KBM-7 (cell line): ENCODE measurements at regions of chr2 and their contacts with region 1.

Region 1: DNA sequence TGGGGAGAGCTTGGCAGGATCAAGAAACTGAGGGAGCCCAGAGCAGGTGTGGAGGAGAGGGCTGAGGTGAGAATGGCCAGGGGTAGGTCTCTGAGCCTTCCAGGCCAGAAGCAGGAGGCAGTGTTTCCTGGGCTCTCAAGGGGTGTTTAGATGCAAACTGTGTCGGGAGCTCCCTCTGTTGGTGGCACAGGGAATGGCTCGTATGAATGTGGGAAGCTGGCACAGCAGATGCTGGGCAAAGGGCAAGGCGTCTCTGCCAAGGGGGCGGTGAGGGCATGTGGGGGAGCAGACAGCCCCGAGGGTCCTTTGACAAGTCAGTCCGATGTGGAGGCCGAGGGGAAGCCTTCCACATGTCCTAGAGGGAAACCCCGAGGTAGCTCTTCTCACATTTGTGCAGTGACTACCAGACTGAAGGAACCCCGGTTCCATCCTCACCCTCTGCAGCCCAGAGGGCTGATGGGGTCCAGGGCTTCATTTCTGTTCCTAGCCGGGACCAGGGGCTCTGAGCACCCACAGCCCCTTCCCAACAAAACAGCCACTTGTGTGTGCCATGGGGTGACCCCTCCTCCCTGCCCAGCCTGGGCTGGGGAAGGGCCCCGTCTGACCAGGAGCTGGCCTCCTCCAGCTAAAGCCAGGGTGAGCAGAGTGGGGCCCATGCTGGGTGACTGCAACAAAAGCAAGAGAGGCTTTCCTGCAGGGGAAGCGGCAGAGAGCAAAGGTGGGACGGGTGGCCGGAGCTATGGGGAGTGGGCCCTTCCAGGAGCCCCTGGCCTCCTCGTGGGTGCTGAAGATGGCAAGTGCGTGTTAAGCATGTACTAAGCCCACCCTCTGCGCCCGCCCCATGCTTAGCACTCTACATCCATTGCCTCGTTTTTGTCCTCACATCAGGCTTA is 103.4 kb downstream of the SEPTIN10 start:
- DNase-seq: peak; percentile 68

Region 2: GRCh38 chr2:109128048-109128465 is 382.3 kb before region 1 on chr2:
- in situ Hi-C with region 1: loop called (anchors 25 kb)
- DNase-seq: peak; percentile 84

Region 3: DNA sequence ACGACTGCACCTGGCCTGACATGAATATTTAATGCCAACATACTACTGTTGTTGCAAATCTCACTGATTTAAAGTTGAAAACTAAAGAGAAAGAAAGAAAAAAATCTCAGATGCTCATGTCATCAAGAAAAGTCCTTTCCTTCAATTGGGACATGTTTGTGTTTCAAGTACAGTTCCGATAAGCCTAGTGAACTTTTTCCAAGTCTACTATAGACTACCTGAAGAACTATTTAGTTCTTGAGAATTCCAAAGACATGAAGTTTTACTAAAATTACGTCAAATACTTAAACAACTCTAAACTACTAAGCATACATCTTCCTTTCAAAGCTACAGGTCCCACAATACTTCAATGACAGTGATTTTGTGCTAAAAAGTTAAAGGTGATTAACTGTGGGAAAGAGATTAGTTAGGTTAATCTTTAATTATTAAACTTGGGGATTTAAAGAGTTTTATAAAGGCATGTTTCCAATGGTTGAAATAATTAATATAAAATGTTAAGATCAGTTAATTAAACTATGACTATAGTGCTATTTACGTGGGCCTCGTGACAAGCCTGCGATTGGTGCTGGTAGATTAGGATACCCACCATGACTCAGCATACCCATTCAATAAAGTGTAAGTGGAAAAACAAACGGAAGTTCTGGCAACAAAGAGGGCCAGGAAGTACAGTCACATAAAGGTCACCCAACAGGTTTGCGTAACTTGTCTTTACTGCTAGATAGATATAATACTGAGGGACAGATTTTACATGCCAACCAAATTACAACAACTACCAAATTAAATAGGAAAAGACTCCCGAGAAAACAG is 47.9 kb after region 1 on chr2:
- in situ Hi-C with region 1: no loop called
- DNase-seq: peak; percentile 50

Region 4: DNA sequence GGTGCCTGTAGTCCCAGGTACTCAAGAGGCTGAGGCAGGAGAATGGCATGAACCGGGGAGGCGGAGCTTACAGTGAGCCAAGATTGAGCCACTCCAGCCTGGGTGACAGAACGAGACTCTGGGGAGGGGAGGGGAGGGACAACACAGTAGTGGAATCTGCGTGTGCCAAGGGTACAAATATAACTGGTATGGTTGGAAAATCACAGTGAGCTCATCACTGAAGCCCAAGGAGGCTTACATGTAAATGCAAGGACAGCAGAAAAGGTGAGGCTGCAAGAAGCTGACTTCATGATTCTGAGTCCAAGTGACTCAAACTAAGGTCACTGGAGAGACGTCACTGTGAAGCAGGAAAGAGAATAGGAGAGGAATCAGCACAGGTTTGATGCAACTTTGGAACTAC is 94.2 kb after region 1 on chr2:
- in situ Hi-C with region 1: no loop called
- DNase-seq: no peak